Caco-2 (cell line): ENCODE measurements at regions of chr6 and their contacts with region 1.

Region 1: DNA sequence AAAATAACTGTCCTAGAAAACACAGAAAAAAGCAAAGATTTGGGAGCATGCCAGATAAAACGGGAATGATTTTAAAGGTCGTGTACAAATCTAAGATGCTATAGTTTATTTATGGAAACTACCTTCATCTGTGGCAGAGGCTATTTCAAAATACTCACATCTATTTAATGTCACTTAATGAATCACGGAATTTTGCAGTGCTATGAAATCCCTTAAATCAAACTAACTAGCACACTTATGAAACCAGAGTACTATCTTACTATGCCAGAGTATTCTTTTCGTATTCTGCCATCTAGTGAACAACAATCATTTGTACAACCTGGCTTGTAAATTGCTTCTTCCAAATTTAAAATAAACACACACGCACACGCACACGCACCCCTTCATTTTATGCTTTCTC is 77.9 kb upstream of the BMP5 start:
- DNase-seq: no peak
- H3K4me3 ChIP-seq: no peak overlapping the region
- H3K4me3 Mint-ChIP-seq: no peak overlapping the region
- H3K27ac Mint-ChIP-seq: no peak overlapping the region
- H3K4me1 ChIP-seq: 0 out of 2 replicates have a peak, but pooled peaks cover 4% of the 10 kb centered on the region
- H3K4me1 Mint-ChIP-seq: no peaks in the 10 kb centered on the region
- H3K27me3 ChIP-seq: no peaks in the 10 kb centered on the region
- H3K27me3 Mint-ChIP-seq: no peaks in the 10 kb centered on the region
- CTCF ChIP-seq: no peak

Region 2: DNA sequence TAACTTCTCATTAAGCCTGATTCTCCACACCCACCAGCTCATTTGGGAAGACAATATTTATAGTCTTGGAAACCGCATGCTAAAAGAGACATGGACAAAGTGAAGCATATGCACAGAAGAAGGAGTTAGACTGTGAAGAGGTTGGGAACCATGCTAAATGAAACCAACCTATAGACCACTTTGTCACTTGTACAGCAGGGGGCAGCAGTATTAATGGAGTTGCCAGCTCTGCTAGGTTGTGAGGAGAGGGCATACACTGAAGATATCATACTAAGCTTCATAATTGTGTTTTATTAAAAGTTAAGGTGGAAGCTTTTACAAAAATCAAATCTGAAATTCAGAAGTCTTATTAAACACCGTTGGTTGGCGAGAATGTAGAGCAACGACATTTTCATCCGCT is 336.1 kb before region 1 on chr6:
- CTCF ChIA-PET with region 1: no interaction called
- POLR2A ChIA-PET with region 1: no interaction called
- intact Hi-C with region 1: loop called (anchors 1 kb)
- DNase-seq: peak in 1 of 2 experiments; percentile 50
- H3K4me3 ChIP-seq: no peak overlapping the region
- H3K4me3 Mint-ChIP-seq: no peak overlapping the region
- H3K27ac Mint-ChIP-seq: no peak overlapping the region
- H3K4me1 ChIP-seq: no peaks in the 10 kb centered on the region
- H3K4me1 Mint-ChIP-seq: no peaks in the 10 kb centered on the region
- H3K27me3 ChIP-seq: no peaks in the 10 kb centered on the region
- H3K27me3 Mint-ChIP-seq: no peaks in the 10 kb centered on the region
- CTCF ChIP-seq: peak; percentile 47 to 48

Region 3: DNA sequence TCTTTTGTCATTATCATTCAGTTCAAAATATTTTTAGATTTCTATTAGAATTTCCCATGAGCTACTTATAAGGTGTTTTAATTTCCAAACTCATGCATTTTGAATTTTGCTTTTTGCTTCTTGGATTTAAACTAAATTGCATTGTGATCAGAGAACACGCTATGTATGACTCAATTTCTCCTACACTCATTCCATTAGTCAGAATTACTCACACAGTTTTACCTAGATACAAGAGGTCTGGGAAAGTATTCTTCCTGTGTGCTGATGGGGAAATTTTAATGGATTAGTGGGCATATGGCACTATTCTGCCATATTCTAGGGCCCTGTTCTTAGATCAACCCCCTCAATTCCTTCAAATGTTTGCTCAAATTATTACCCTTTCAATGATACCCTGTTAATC is 28.0 kb before region 1 on chr6:
- CTCF ChIA-PET with region 1: no interaction called
- POLR2A ChIA-PET with region 1: no interaction called
- intact Hi-C with region 1: no loop called
- DNase-seq: no peak
- H3K4me3 ChIP-seq: no peak overlapping the region
- H3K4me3 Mint-ChIP-seq: no peak overlapping the region
- H3K27ac Mint-ChIP-seq: no peak overlapping the region
- H3K4me1 ChIP-seq: no peaks in the 10 kb centered on the region
- H3K4me1 Mint-ChIP-seq: no peaks in the 10 kb centered on the region
- H3K27me3 ChIP-seq: no peaks in the 10 kb centered on the region
- H3K27me3 Mint-ChIP-seq: peaks cover 2% of the 10 kb centered on the region
- CTCF ChIP-seq: no peak